ENCODE measurements at regions of chr16 and their contacts with region 1.

Region 1: GRCh38 chr16:53503270-53503923 is 388 bp upstream of the AKTIP start:
- DNase-seq: peak; percentile 98
- H3K4me3 ChIP-seq: peak overlapping the region; percentile 67 to 87
- H3K27ac ChIP-seq: peak overlapping the region; percentile 81 to 98
- H3K4me1 ChIP-seq: peaks cover 7 to 23% of the 10 kb centered on the region in 2 experiments
- H3K27me3 ChIP-seq: no peaks in the 10 kb centered on the region
- CTCF ChIP-seq: no peak
- EP300 ChIP-seq: peak in 1 of 2 experiments; percentile 17; a peak in 1 of 4 replicates
- RAD21 ChIP-seq: no peak

Region 2: DNA sequence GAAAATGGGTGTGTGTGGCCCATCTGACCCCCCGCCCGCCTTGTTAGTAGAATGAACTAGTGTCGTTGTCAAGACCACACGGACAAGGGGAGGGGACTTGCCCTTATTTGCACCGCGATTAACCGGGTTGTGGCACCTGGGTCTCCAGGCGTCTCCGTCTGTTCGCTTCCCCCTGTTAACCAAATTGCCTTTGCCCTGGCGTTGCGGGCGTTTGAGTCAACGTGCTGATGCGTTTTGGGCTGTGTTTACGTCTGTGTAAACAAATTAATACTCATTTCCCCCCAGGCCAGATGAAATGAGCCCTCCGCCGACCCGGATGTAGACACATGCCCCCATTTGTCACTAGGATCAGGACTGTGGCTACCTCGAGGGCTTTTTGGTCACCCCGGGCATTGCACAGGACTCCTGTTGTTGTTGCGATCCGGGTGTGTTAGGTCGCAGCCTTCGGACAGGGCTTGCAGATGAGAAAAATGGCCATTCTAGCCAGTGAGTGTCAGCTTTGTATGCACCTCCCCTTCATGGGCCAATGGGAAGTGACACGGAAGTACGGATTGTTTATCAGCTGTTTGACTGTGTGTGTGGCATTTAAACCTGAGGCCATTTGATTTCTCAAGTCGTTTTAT is 68.2 kb before region 1 on chr16:
- CTCF ChIA-PET with region 1: no interaction called
- POLR2A ChIA-PET with region 1: interaction called, 18 read pairs
- DNase-seq: peak; percentile 82
- H3K4me3 ChIP-seq: peak overlapping the region; percentile 87 to 88
- H3K27ac ChIP-seq: peak overlapping the region; percentile 67 to 73
- H3K4me1 ChIP-seq: peaks cover 9% of the 10 kb centered on the region in 2 experiments; a peak in 3 of 4 replicates
- H3K27me3 ChIP-seq: no peaks in the 10 kb centered on the region
- CTCF ChIP-seq: no peak
- EP300 ChIP-seq: no peak
- RAD21 ChIP-seq: no peak

Measured in SK-N-SH (cell line).